K562 (cell line): ENCODE measurements at regions of chr4 and their contacts with region 1.

Region 1: DNA sequence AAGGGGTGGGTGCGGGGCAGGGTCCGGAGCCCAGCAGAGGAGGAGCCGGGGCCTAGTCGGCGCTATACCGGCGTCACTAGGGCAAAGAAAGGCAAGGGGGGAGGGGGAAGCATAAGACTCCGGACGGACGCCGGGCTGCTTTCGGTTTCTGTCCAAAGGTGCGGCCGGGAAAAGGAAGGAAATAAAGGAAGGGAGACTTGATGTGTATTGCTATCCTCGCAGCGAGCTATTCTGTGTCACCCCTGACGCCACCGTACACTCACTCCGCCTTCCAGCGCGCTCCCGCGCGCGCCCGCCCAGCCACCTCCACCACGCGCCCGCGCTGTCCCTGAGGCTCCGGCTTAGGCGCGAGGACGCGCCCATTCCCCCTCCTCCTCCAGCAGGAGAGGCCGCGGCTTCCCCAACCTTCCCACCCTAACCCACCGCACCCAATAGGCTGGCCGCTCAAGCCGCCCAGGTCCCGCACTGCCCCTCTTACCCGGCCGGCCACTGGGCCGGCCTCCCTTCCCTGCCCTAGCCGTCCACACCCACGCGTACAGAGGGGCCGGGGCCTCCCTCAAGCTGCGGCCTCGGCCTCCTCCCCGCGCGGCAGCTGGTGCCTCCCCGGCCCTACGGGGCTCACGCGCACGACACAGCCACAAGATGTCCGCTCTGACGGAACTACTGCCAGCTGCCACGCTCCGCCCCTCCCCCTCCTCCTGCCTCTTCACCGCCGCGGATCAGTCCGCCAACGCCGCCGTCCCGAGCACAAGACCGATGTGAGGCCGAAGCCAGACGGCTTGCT is at the start of gene UBE2D3:
- DNase-seq: peak; percentile 73 to 94 (median 76)
- ATAC-seq: peak; percentile 62
- H3K4me3 ChIP-seq: peak within 1 kb of the TSS; percentile 97
- H3K27ac ChIP-seq: peak within 1 kb of the TSS; percentile 99
- H3K4me1 ChIP-seq: peaks cover 6 to 9% of the 10 kb centered on the region in 2 experiments
- H3K27me3 ChIP-seq: no peaks in the 10 kb centered on the region
- CTCF ChIP-seq: peak in 2 of 3 experiments; percentile 11 to 25; a peak in 1 of 6 replicates
- EP300 ChIP-seq: peak; percentile 39; the same call in 1 of the 2 replicates
- POLR2A ChIP-seq: peak; percentile 94
- RAD21 ChIP-seq: no peak; a peak in 1 of 4 replicates
- polyA plus RNA-seq, gene UBE2D3: 191 to 202 TPM

Region 2: DNA sequence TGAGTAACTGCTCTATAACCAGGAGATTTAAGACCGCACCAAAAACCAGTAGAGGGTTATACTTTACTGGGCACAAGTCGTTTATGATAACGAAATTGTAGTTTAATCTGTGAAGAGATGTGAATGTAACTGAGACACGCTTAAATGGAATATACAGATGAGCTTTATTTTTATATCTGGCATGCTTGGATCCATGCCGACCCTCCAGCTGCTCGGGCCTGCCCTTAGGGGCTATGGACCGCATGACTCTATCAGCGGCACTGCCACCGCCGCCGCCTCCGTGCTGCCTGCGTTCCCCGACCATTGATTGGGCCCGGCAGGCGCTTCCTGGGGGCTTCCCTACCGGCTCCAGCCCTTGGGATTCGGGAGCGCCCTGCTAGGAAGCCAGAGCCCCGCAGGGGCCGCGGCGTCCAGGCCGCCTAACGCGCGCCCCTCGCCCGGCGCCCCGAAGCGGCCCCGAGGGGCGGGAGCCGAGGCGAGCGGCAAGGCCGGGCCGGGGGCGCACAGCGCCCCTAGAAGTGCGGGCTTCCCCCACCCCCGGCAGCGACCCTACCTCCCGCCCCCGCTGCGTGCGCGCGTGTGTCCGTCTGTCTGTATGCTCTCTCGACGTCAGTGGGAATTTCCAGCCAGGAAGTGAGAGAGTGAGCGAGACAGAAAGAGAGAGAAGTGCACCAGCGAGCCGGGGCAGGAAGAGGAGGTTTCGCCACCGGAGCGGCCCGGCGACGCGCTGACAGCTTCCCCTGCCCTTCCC is 326.2 kb before region 1 on chr4 and contains the start of gene NFKB1:
- CTCF ChIA-PET with region 1: no interaction called
- POLR2A ChIA-PET with region 1: interaction called, 3 read pairs
- in situ Hi-C with region 1: no loop called
- intact Hi-C with region 1: loop called (anchors 5 kb)
- DNase-seq: peak in 3 of 4 experiments; percentile 37 to 44 (median 39)
- ATAC-seq: peak; percentile 23
- H3K4me3 ChIP-seq: peak within 1 kb of the TSS; percentile 81
- H3K27ac ChIP-seq: peak within 1 kb of the TSS; percentile 91
- H3K4me1 ChIP-seq: peaks cover 13 to 18% of the 10 kb centered on the region in 2 experiments; a peak in 4 of 5 replicates
- H3K27me3 ChIP-seq: no peaks in the 10 kb centered on the region
- CTCF ChIP-seq: no peak
- EP300 ChIP-seq: no peak
- POLR2A ChIP-seq: no peak
- RAD21 ChIP-seq: no peak
- polyA plus RNA-seq, gene NFKB1: 2.4 to 3.2 TPM

Region 3: GRCh38 chr4:102736636-102737549 is 90.2 kb before region 1 on chr4:
- CTCF ChIA-PET with region 1: no interaction called
- POLR2A ChIA-PET with region 1: interaction called, 3 read pairs
- in situ Hi-C with region 1: no loop called
- intact Hi-C with region 1: loop called (anchors 5 kb)
- DNase-seq: peak in 1 of 4 experiments; percentile 57
- ATAC-seq: peak; percentile 81
- H3K4me3 ChIP-seq: no peak overlapping the region
- H3K27ac ChIP-seq: no peak overlapping the region
- H3K4me1 ChIP-seq: peaks cover 9 to 10% of the 10 kb centered on the region in 2 experiments
- H3K27me3 ChIP-seq: no peaks in the 10 kb centered on the region
- CTCF ChIP-seq: no peak
- EP300 ChIP-seq: no peak
- POLR2A ChIP-seq: no peak
- RAD21 ChIP-seq: no peak

Region 4: GRCh38 chr4:102815981-102816380 is 11.1 kb before region 1 on chr4:
- CTCF ChIA-PET with region 1: no interaction called
- POLR2A ChIA-PET with region 1: interaction called, 27 read pairs
- in situ Hi-C with region 1: no loop called
- intact Hi-C with region 1: no loop called
- DNase-seq: no peak
- ATAC-seq: no peak
- H3K4me3 ChIP-seq: no peak overlapping the region
- H3K27ac ChIP-seq: 0 out of 3 replicates have a peak overlapping the region, but pooled peaks have one; percentile 19
- H3K4me1 ChIP-seq: peaks cover 8 to 27% of the 10 kb centered on the region in 2 experiments; a peak in 4 of 5 replicates
- H3K27me3 ChIP-seq: no peaks in the 10 kb centered on the region
- CTCF ChIP-seq: no peak
- EP300 ChIP-seq: no peak
- POLR2A ChIP-seq: no peak
- RAD21 ChIP-seq: no peak

Region 5: GRCh38 chr4:103008875-103009729 is 182.0 kb after region 1 on chr4:
- CTCF ChIA-PET with region 1: no interaction called
- POLR2A ChIA-PET with region 1: interaction called, 4 read pairs
- in situ Hi-C with region 1: no loop called
- intact Hi-C with region 1: loop called (anchors 2 kb)
- DNase-seq: peak; percentile 23 to 78 (median 38)
- ATAC-seq: peak; percentile 93
- H3K4me3 ChIP-seq: no peak overlapping the region
- H3K27ac ChIP-seq: no peak overlapping the region
- H3K4me1 ChIP-seq: peaks cover 9 to 18% of the 10 kb centered on the region in 2 experiments; a peak in 4 of 5 replicates
- H3K27me3 ChIP-seq: no peaks in the 10 kb centered on the region
- CTCF ChIP-seq: peak; percentile 59 to 91 (median 68); a peak in 5 of 6 replicates
- EP300 ChIP-seq: no peak
- POLR2A ChIP-seq: no peak
- RAD21 ChIP-seq: peak; percentile 94 to 97

Region 6: DNA sequence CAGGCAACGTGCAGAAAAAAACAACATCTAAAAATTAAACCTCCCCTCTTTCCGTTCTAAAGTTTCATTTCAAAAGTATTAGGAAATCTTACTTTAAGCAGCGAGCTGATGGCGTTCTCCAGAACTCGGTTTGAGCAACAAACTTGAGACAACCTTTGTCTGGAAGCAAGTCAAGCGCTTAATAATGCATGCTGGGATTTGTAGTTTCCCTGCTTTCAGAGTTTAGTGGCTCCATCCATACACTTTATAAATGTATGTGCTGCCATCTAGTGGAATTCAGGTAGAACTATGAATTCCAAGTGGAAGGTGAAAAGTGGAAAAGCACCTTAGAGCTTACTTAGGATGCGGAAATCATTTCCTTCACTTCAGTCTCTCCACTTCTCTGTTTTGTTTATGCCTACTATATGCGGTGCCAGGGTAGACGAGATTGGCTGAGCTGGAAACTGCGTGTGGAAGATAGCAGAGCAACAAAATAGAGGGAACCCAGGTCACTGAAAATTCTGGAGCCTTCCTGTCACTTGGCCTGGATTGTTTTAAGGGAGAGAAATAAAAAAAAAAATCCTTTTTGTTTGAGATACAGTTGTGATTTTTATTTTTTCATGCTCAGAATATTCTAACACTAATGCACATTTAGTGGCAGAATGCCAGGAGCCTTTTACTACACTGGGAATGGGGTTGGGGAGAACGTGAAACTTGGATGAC is 272.8 kb after region 1 on chr4 and contains the start of gene BDH2:
- CTCF ChIA-PET with region 1: no interaction called
- POLR2A ChIA-PET with region 1: interaction called, 3 read pairs
- in situ Hi-C with region 1: no loop called
- intact Hi-C with region 1: loop called (anchors 5 kb)
- DNase-seq: peak; percentile 69 to 84 (median 76)
- ATAC-seq: peak; percentile 94
- H3K4me3 ChIP-seq: peak within 1 kb of the TSS; percentile 27
- H3K27ac ChIP-seq: no peak within 1 kb of the TSS
- H3K4me1 ChIP-seq: no peaks in the 10 kb centered on the region
- H3K27me3 ChIP-seq: no peaks in the 10 kb centered on the region
- CTCF ChIP-seq: peak; percentile 55 to 89 (median 68); a peak in 5 of 6 replicates
- EP300 ChIP-seq: no peak
- POLR2A ChIP-seq: no peak
- RAD21 ChIP-seq: peak; percentile 74 to 78
- polyA plus RNA-seq, gene BDH2: 9.9 to 10.7 TPM